ENCODE measurements at regions of chr11 and their contacts with region 1.

Region 1: DNA sequence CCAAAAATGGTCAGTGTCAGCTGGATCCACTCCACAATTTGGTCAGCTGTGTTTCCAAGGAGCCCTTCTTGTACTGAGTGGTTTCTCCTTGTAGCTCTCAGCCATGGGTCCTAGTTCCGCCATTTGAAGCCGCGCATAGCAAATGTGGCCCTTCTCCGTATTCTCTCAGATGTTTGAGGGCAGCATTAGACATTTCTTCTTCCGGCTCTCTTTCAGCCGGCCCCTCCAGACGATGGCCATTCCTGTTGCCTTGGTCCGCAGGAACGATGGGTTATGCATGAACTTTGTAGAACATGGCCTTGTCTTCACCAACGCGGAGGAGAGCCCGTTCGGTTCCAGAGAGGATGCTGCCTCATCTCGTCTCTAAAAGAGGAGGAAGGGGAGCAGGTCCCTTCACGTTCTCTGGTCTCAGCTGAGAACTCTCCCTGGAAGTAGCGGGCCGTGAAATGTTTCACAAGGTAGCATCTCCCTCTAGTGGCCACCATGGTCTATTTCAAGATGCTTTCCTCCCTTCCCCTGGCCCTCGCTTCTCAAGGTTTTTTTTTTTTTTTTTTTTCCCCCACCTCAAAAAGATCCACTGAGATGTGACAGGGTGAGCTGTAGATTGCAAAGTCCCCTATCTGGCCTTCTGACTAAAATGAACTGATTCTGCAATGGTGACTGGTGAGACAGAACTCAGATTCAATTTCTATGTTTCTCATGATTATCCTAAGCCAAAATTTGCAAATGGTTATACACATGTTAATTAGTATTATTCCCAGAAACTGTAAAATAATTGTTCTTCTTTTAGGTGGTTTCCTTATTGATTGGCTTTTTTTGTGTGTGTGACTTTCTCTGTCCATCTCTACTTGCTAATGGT is 19.8 kb upstream of the PLET1 start:
- DNase-seq: peak; percentile 83
- ATAC-seq: peak; percentile 91
- H3K4me3 ChIP-seq: peak overlapping the region; percentile 24
- H3K27ac ChIP-seq: no peak overlapping the region
- H3K4me1 ChIP-seq: peaks cover 2% of the 10 kb centered on the region
- H3K27me3 ChIP-seq: 0 out of 2 replicates have a peak, but pooled peaks cover 7% of the 10 kb centered on the region
- CTCF ChIP-seq: peak; percentile 85
- POLR2A ChIP-seq: no peak
- RAD21 ChIP-seq: peak; percentile 87

Region 2: GRCh38 chr11:112086422-112087191 is 193.9 kb before region 1 on chr11 and contains the starts of genes SDHD and TIMM8B:
- CTCF ChIA-PET with region 1: no interaction called
- POLR2A ChIA-PET with region 1: no interaction called
- dilution Hi-C with region 1: no loop called
- in situ Hi-C with region 1: no loop called
- intact Hi-C with region 1: loop called (anchors 1 kb)
- DNase-seq: peak; percentile 96
- ATAC-seq: peak; percentile 92
- H3K4me3 ChIP-seq: peak within 1 kb of the TSS; percentile 78
- H3K27ac ChIP-seq: peak within 1 kb of the TSS; percentile 84
- H3K4me1 ChIP-seq: peaks cover 2% of the 10 kb centered on the region; the same call in 1 of the 2 replicates
- H3K27me3 ChIP-seq: no peaks in the 10 kb centered on the region
- CTCF ChIP-seq: peak; percentile 44
- POLR2A ChIP-seq: peak; percentile 73
- RAD21 ChIP-seq: peak; percentile 45
- total RNA-seq, gene SDHD: 83.2 and 130 TPM in 2 replicates
- total RNA-seq, gene TIMM8B: 35.5 and 48.9 TPM in 2 replicates

Region 3: GRCh38 chr11:112127056-112127455 is 153.4 kb before region 1 on chr11:
- CTCF ChIA-PET with region 1: no interaction called
- POLR2A ChIA-PET with region 1: no interaction called
- dilution Hi-C with region 1: no loop called
- in situ Hi-C with region 1: no loop called
- intact Hi-C with region 1: no loop called
- DNase-seq: no peak
- ATAC-seq: no peak
- H3K4me3 ChIP-seq: no peak overlapping the region
- H3K27ac ChIP-seq: no peak overlapping the region
- H3K4me1 ChIP-seq: peaks cover 7% of the 10 kb centered on the region
- H3K27me3 ChIP-seq: no peaks in the 10 kb centered on the region
- CTCF ChIP-seq: no peak
- POLR2A ChIP-seq: no peak
- RAD21 ChIP-seq: no peak

Region 4: GRCh38 chr11:112219476-112220232 is 60.8 kb before region 1 on chr11:
- CTCF ChIA-PET with region 1: interaction called, 64 read pairs
- POLR2A ChIA-PET with region 1: interaction called, 5 read pairs
- dilution Hi-C with region 1: no loop called
- in situ Hi-C with region 1: loop called (anchors 5 kb)
- intact Hi-C with region 1: loop called (anchors 1 kb)
- DNase-seq: peak; percentile 81
- ATAC-seq: peak; percentile 84
- H3K4me3 ChIP-seq: no peak overlapping the region
- H3K27ac ChIP-seq: no peak overlapping the region
- H3K4me1 ChIP-seq: peaks cover 19% of the 10 kb centered on the region
- H3K27me3 ChIP-seq: no peaks in the 10 kb centered on the region
- CTCF ChIP-seq: peak; percentile 90
- POLR2A ChIP-seq: no peak
- RAD21 ChIP-seq: peak; percentile 92

Region 5: GRCh38 chr11:112241486-112241885 is 39.0 kb before region 1 on chr11:
- CTCF ChIA-PET with region 1: interaction called, 4 read pairs
- POLR2A ChIA-PET with region 1: no interaction called
- dilution Hi-C with region 1: no loop called
- in situ Hi-C with region 1: no loop called
- intact Hi-C with region 1: loop called (anchors 1 kb)
- DNase-seq: peak; percentile 85
- ATAC-seq: peak; percentile 84
- H3K4me3 ChIP-seq: no peak overlapping the region
- H3K27ac ChIP-seq: no peak overlapping the region; the same call in 1 of the 2 replicates
- H3K4me1 ChIP-seq: peaks cover 6% of the 10 kb centered on the region
- H3K27me3 ChIP-seq: no peaks in the 10 kb centered on the region
- CTCF ChIP-seq: no peak
- POLR2A ChIP-seq: no peak
- RAD21 ChIP-seq: no peak

Region 6: GRCh38 chr11:113274713-113275582 is 994.5 kb after region 1 on chr11:
- CTCF ChIA-PET with region 1: interaction called, 11 read pairs
- POLR2A ChIA-PET with region 1: no interaction called
- dilution Hi-C with region 1: no loop called
- in situ Hi-C with region 1: loop called (anchors 10 kb)
- intact Hi-C with region 1: no loop called
- DNase-seq: no peak
- ATAC-seq: no peak
- H3K4me3 ChIP-seq: no peak overlapping the region
- H3K27ac ChIP-seq: no peak overlapping the region
- H3K4me1 ChIP-seq: no peaks in the 10 kb centered on the region
- H3K27me3 ChIP-seq: no peaks in the 10 kb centered on the region; the same call in 1 of the 2 replicates
- CTCF ChIP-seq: no peak
- POLR2A ChIP-seq: no peak
- RAD21 ChIP-seq: no peak

Measured in IMR-90 (cell line).